Activated B cell treated with CpG ODN at 0.5 μM for 24 hours (primary cell): ENCODE measurements at regions of chr17 and their contacts with region 1.

Region 1: GRCh38 chr17:37358830-37359681 is 16.7 kb upstream of the C17orf78 start:
- DNase-seq: peak; percentile 93
- ATAC-seq: peak; percentile 97
- H3K4me3 Mint-ChIP-seq: peak overlapping the region; percentile 81
- H3K27ac Mint-ChIP-seq: peak overlapping the region; percentile 67
- H3K4me1 Mint-ChIP-seq: peaks cover 18% of the 10 kb centered on the region
- H3K27me3 Mint-ChIP-seq: no peaks in the 10 kb centered on the region
- CTCF ChIP-seq: no peak

Region 2: GRCh38 chr17:36545465-36546417 is 813.3 kb before region 1 on chr17:
- CTCF ChIA-PET with region 1: no interaction called
- POLR2A ChIA-PET with region 1: interaction called, 3 read pairs
- intact Hi-C with region 1: loop called (anchors 1 kb)
- DNase-seq: peak; percentile 94
- ATAC-seq: peak; percentile 67
- H3K4me3 Mint-ChIP-seq: peak overlapping the region; percentile 92
- H3K27ac Mint-ChIP-seq: peak overlapping the region; percentile 92
- H3K4me1 Mint-ChIP-seq: peaks cover 59% of the 10 kb centered on the region
- H3K27me3 Mint-ChIP-seq: no peaks in the 10 kb centered on the region
- CTCF ChIP-seq: no peak

Region 3: DNA sequence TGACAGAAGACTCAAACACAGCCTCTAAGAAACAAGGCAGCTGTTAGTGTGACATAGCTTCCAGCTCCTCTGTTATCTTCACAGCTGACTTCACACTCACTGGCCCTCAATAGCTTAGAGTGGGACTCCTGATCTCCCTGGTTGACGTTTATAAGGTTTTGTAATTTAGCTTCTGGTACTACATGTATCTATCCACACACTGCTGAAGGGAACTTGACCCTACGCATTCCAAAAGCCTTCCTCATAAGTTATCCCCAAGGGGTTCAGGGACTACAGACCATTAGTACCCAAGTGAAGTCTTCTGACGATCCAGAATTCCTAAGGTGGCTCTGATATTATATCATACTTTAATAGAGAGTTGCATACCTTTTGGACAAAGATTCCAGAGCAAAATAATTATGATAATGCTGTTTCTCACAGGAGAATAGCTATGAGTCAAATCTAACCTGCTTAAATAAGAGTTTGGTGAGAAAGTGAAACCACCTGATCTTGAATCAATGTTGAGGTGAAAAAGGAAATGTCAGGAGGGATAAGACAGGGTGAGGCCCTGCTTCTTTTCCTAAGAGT is 33.1 kb after region 1 on chr17:
- CTCF ChIA-PET with region 1: no interaction called
- POLR2A ChIA-PET with region 1: no interaction called
- intact Hi-C with region 1: loop called (anchors 1 kb)
- DNase-seq: no peak
- ATAC-seq: no peak
- H3K4me3 Mint-ChIP-seq: no peak overlapping the region
- H3K27ac Mint-ChIP-seq: no peak overlapping the region
- H3K4me1 Mint-ChIP-seq: peaks cover 7% of the 10 kb centered on the region
- H3K27me3 Mint-ChIP-seq: no peaks in the 10 kb centered on the region
- CTCF ChIP-seq: no peak

Region 4: GRCh38 chr17:37489197-37490001 is 130.3 kb after region 1 on chr17 and contains the start of gene DUSP14:
- CTCF ChIA-PET with region 1: no interaction called
- POLR2A ChIA-PET with region 1: interaction called, 4 read pairs
- intact Hi-C with region 1: loop called (anchors 1 kb)
- DNase-seq: peak; percentile 79
- ATAC-seq: peak; percentile 82
- H3K4me3 Mint-ChIP-seq: peak within 1 kb of the TSS; percentile 95
- H3K27ac Mint-ChIP-seq: peak within 1 kb of the TSS; percentile 82
- H3K4me1 Mint-ChIP-seq: peaks cover 26% of the 10 kb centered on the region
- H3K27me3 Mint-ChIP-seq: no peaks in the 10 kb centered on the region
- CTCF ChIP-seq: no peak
- total RNA-seq, gene DUSP14: 4.3 TPM in 2 replicates

Region 5: DNA sequence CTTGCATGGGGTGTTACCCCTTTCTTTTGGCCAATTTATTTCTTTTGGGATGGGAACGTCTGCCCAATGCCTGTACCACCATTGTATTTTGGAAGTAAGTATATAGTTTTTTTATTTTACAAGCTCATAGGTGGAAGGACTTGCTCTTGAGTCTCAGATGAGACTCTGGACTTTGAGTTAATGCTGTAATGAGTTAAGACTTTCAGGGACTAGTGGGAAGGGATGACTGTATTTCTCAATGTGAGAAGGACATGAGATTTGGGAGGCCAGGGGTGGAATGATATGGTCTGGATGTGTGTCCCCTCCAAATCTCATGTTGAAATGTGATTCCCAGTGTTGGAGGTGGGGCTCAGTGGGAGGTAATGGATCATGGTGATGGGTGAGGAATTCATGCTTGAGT is 336.7 kb after region 1 on chr17:
- CTCF ChIA-PET with region 1: no interaction called
- POLR2A ChIA-PET with region 1: interaction called, 12 read pairs
- intact Hi-C with region 1: no loop called
- DNase-seq: no peak
- ATAC-seq: no peak
- H3K4me3 Mint-ChIP-seq: no peak overlapping the region
- H3K27ac Mint-ChIP-seq: no peak overlapping the region
- H3K4me1 Mint-ChIP-seq: peaks cover 8% of the 10 kb centered on the region
- H3K27me3 Mint-ChIP-seq: no peaks in the 10 kb centered on the region
- CTCF ChIP-seq: no peak

Region 6: DNA sequence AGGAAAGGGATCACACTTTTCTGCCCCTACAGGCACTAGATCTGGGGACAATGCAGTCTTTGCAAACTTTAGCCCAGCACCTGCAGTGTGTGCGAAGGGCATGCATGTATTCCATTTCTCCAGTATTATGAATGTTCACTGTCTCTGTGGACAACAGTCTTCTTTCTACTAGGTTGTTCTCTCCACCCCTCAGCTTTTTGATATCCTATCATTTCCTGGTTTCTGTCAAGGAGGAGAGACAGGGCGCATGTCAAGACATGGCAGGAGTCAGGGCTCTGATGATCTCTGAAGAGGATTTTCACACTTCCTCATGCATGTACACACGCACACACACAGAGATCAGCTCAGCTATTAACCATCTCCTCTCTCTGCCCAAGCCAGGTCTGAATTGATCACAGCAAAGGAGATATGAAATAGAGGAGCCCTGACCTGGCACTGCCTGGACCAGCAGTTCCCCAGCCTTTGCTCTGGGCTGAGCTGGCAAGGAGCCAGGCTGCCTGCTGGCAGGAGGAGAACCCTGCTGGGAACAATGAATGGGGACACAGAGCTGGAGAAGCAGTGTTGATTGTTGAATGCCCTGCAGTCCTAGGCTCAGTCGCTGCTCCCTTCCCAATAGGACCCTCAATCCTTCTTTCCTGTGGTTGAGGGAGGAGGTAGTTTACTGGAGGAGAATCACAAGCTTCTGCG is 982.1 kb after region 1 on chr17:
- CTCF ChIA-PET with region 1: no interaction called
- POLR2A ChIA-PET with region 1: no interaction called
- intact Hi-C with region 1: no loop called
- DNase-seq: no peak
- ATAC-seq: no peak
- H3K4me3 Mint-ChIP-seq: no peak overlapping the region
- H3K27ac Mint-ChIP-seq: no peak overlapping the region
- H3K4me1 Mint-ChIP-seq: no peaks in the 10 kb centered on the region
- H3K27me3 Mint-ChIP-seq: peaks cover 2% of the 10 kb centered on the region
- CTCF ChIP-seq: no peak